ENCODE measurements at regions of chr18 and their contacts with region 1.

Region 1: GRCh38 chr18:47775961-47776360 is 154.5 kb downstream of the SMAD2 start:
- DNase-seq: peak; percentile 60 to 65
- H3K4me3 ChIP-seq: no peak overlapping the region
- H3K27ac ChIP-seq: no peak overlapping the region
- H3K4me1 ChIP-seq: no peaks in the 10 kb centered on the region
- H3K27me3 ChIP-seq: no peaks in the 10 kb centered on the region
- CTCF ChIP-seq: peak; percentile 15 to 79 (median 68)
- POLR2A ChIP-seq: no peak

Region 2: GRCh38 chr18:48007955-48008701 is 232.2 kb after region 1 on chr18:
- intact Hi-C with region 1: loop called (anchors 5 kb)
- DNase-seq: peak; percentile 78
- H3K4me3 ChIP-seq: peak overlapping the region; percentile 33 to 47 (median 38)
- H3K27ac ChIP-seq: peak overlapping the region in 2 of 3 donors; percentile 34 to 46
- H3K4me1 ChIP-seq: peaks cover 3 to 25% of the 10 kb centered on the region in 2 donors
- H3K27me3 ChIP-seq: no peaks in the 10 kb centered on the region
- CTCF ChIP-seq: peak in 5 of 6 experiments; percentile 17 to 97 (median 53)
- POLR2A ChIP-seq: peak in 1 of 2 donors; percentile 24

Region 3: DNA sequence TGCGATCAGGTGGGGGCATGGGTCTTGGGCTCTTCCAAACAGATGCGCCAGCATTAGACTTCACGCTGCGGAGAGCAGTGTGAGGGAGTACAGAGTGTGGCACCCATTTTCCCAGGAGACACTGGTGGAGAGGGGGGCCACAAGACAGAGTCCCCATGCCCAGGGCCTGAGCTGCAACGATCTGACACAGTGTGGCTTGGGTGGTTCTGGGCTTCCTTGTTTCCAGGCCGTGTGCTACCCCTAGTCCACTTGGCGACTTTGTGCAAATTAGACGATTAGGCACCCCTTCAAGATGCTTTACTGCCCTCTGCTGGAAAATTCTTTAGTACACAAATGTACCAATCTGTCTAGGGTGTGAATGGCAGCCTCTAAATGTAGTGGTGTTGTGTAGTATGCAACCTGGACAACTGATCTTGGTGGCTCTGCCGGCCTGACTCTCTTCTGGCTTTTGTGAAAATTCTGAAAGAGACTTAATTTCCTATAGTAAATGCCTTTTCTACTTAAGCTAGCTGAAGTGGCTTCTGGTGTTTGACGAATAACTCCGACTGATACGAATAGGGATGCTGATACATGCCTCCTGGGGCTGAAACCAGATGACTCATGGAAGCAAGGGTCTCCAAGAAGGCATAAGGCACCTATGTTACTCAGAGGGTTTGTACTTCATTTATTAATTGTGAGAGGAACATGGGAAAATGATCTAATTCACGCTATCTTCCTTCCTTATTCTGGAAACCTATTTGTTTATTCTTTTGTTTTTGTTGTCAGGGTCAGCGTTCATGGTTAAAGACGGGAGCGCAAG is 246.8 kb after region 1 on chr18:
- intact Hi-C with region 1: loop called (anchors 2 kb)
- DNase-seq: no peak
- H3K4me3 ChIP-seq: no peak overlapping the region
- H3K27ac ChIP-seq: no peak overlapping the region
- H3K4me1 ChIP-seq: peaks cover 32 to 48% of the 10 kb centered on the region in 2 donors
- H3K27me3 ChIP-seq: no peaks in the 10 kb centered on the region
- CTCF ChIP-seq: peak in 5 of 6 experiments; percentile 24 to 63 (median 58)
- POLR2A ChIP-seq: no peak

Region 4: DNA sequence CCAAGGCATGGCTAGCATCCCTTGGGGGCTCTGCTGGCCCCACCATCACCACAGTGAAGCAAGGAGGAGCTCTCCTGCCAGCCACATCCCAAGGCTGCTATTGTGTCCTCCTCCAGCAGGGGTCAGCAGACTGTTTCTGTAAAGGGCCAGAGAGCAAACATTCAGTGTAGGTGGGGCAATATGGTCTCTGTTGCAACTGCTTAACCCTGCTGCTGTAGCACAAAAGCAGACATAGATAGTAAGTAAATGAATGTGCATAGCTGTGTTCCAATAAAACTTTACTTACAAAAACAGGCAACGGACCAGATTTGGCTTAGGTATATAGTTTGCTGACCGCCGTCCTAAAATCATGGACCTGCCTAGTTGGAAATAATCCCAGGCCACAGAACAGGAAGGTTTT is 669.6 kb after region 1 on chr18:
- intact Hi-C with region 1: loop called (anchors 5 kb)
- DNase-seq: peak; percentile 77 to 80
- H3K4me3 ChIP-seq: no peak overlapping the region
- H3K27ac ChIP-seq: no peak overlapping the region
- H3K4me1 ChIP-seq: peaks cover 10 to 32% of the 10 kb centered on the region in 2 donors
- H3K27me3 ChIP-seq: no peaks in the 10 kb centered on the region
- CTCF ChIP-seq: peak; percentile 72 to 92 (median 76)
- POLR2A ChIP-seq: no peak